ENCODE measurements at regions of chr15 and their contacts with region 1.

Region 1: GRCh38 chr15:83066734-83067637 is at the start of gene BTBD1:
- DNase-seq: peak; percentile 44 to 89 (median 75)
- ATAC-seq: peak; percentile 78
- H3K4me3 ChIP-seq: peak within 1 kb of the TSS; percentile 77 to 84
- H3K4me3 Mint-ChIP-seq: peak within 1 kb of the TSS; percentile 87
- H3K27ac ChIP-seq: peak within 1 kb of the TSS; percentile 65 to 78
- H3K27ac Mint-ChIP-seq: peak within 1 kb of the TSS; percentile 77
- H3K4me1 ChIP-seq: peaks cover 42% of the 10 kb centered on the region
- H3K4me1 Mint-ChIP-seq: peaks cover 26% of the 10 kb centered on the region
- H3K27me3 ChIP-seq: no peaks in the 10 kb centered on the region
- H3K27me3 Mint-ChIP-seq: no peaks in the 10 kb centered on the region
- CTCF ChIP-seq: no peak
- total RNA-seq, gene BTBD1: 32.5 to 33.6 TPM

Region 2: DNA sequence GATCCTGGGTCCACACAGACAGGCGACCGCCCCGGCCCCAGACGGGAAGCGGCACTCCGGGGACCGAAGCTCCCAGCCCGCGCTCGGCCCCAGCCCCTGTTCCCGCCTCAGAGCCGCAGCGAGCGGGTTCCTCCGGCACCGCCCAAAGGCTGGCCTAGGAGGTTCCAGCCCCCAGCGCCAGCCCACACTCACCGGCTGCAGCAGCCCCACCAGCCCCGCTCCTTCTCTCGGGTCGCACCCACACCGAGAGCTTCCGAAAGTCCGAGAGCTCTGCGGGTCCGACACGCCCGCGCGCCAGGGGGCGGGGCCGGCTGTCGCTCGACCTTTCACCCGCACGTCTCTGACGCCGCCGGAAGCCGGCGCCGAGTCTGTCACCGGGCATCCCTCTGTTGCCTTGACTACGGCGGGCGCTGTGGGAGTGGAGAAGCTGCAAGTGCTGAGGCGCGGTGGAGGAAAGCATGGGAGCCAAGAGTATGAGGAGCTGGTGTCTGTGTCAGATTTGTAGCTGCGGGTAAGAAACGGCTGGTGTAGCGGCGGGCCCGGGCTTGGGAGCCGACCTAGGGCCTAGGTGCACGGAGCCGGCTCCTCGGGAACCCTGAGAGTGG is 804.5 kb before region 1 on chr15 and contains the starts of genes EFL1 and SAXO2:
- CTCF ChIA-PET with region 1: no interaction called
- POLR2A ChIA-PET with region 1: no interaction called
- intact Hi-C with region 1: loop called in 1 of 2 experiments (anchors 5 kb)
- DNase-seq: peak; percentile 76 to 93 (median 88)
- ATAC-seq: peak; percentile 94
- H3K4me3 ChIP-seq: peak within 1 kb of the TSS; percentile 59 to 72
- H3K4me3 Mint-ChIP-seq: peak within 1 kb of the TSS; percentile 93
- H3K27ac ChIP-seq: peak within 1 kb of the TSS; percentile 40 to 58
- H3K27ac Mint-ChIP-seq: peak within 1 kb of the TSS; percentile 88
- H3K4me1 ChIP-seq: peaks cover 24% of the 10 kb centered on the region
- H3K4me1 Mint-ChIP-seq: peaks cover 35% of the 10 kb centered on the region
- H3K27me3 ChIP-seq: no peaks in the 10 kb centered on the region
- H3K27me3 Mint-ChIP-seq: no peaks in the 10 kb centered on the region
- CTCF ChIP-seq: no peak
- total RNA-seq, gene EFL1: 5.0 to 9.5 TPM
- total RNA-seq, gene SAXO2: 2.6 to 2.9 TPM

Region 3: GRCh38 chr15:82680200-82681102 is 386.5 kb before region 1 on chr15:
- CTCF ChIA-PET with region 1: no interaction called
- POLR2A ChIA-PET with region 1: no interaction called
- intact Hi-C with region 1: loop called in 1 of 2 experiments (anchors 5 kb)
- DNase-seq: peak; percentile 65 to 92 (median 82)
- ATAC-seq: peak; percentile 95
- H3K4me3 ChIP-seq: peak overlapping the region; percentile 71 to 81
- H3K4me3 Mint-ChIP-seq: peak overlapping the region; percentile 91
- H3K27ac ChIP-seq: peak overlapping the region; percentile 68 to 76
- H3K27ac Mint-ChIP-seq: peak overlapping the region; percentile 96
- H3K4me1 ChIP-seq: peaks cover 12% of the 10 kb centered on the region
- H3K4me1 Mint-ChIP-seq: peaks cover 13% of the 10 kb centered on the region
- H3K27me3 ChIP-seq: peaks cover 0 to 3% of the 10 kb centered on the region in 2 experiments
- H3K27me3 Mint-ChIP-seq: no peaks in the 10 kb centered on the region
- CTCF ChIP-seq: peak; percentile 25

Region 4: DNA sequence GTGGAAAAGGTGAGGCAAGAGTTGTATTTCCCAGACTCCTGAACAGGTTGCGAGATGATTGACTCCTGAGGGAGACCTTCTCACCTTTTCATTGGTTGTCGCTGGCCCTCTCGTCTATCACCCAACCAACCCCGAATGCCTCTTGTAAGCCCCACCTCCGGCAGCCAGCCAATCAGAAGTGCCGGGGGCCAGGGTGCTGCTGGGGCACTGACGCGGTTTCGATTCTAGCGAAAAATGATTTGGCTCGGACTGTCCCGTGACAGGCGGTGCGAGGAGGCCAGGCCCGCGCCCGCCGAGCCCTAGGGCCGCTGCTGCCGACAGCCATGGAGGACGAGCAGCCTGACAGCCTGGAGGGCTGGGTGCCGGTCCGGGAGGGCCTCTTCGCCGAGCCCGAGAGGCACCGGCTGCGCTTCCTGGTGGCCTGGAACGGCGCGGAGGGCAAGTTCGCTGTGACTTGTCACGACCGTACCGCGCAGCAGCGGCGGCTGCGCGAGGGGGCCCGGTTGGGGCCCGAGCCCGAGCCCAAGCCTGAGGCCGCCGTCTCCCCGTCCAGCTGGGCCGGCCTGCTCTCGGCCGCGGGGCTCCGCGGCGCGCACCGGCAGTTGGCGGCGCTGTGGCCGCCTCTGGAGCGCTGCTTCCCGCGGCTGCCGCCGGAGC is 257.5 kb before region 1 on chr15 and contains the start of gene WHAMM:
- CTCF ChIA-PET with region 1: no interaction called
- POLR2A ChIA-PET with region 1: interaction called, 3 read pairs
- intact Hi-C with region 1: loop called in 1 of 2 experiments (anchors 5 kb)
- DNase-seq: peak; percentile 89 to 98 (median 94)
- ATAC-seq: peak; percentile 93
- H3K4me3 ChIP-seq: peak within 1 kb of the TSS; percentile 67 to 69
- H3K4me3 Mint-ChIP-seq: peak within 1 kb of the TSS; percentile 92
- H3K27ac ChIP-seq: peak within 1 kb of the TSS; percentile 93 to 97
- H3K27ac Mint-ChIP-seq: peak within 1 kb of the TSS; percentile 97
- H3K4me1 ChIP-seq: peaks cover 26% of the 10 kb centered on the region
- H3K4me1 Mint-ChIP-seq: peaks cover 32% of the 10 kb centered on the region
- H3K27me3 ChIP-seq: no peaks in the 10 kb centered on the region
- H3K27me3 Mint-ChIP-seq: no peaks in the 10 kb centered on the region
- CTCF ChIP-seq: no peak
- total RNA-seq, gene WHAMM: 123 to 124 TPM

Region 5: GRCh38 chr15:83011271-83012075 is 55.5 kb before region 1 on chr15 and contains the start of gene C15orf40:
- CTCF ChIA-PET with region 1: interaction called, 3 read pairs
- POLR2A ChIA-PET with region 1: interaction called, 11 read pairs
- intact Hi-C with region 1: loop called (anchors 1 kb)
- DNase-seq: peak; percentile 62 to 94 (median 86)
- ATAC-seq: peak; percentile 80
- H3K4me3 ChIP-seq: peak within 1 kb of the TSS; percentile 86 to 95
- H3K4me3 Mint-ChIP-seq: peak within 1 kb of the TSS; percentile 100
- H3K27ac ChIP-seq: peak within 1 kb of the TSS; percentile 75 to 79
- H3K27ac Mint-ChIP-seq: peak within 1 kb of the TSS; percentile 99
- H3K4me1 ChIP-seq: peaks cover 26% of the 10 kb centered on the region
- H3K4me1 Mint-ChIP-seq: peaks cover 58% of the 10 kb centered on the region
- H3K27me3 ChIP-seq: no peaks in the 10 kb centered on the region
- H3K27me3 Mint-ChIP-seq: no peaks in the 10 kb centered on the region
- CTCF ChIP-seq: no peak
- total RNA-seq, gene C15orf40: 11.8 to 12.3 TPM

Region 6: DNA sequence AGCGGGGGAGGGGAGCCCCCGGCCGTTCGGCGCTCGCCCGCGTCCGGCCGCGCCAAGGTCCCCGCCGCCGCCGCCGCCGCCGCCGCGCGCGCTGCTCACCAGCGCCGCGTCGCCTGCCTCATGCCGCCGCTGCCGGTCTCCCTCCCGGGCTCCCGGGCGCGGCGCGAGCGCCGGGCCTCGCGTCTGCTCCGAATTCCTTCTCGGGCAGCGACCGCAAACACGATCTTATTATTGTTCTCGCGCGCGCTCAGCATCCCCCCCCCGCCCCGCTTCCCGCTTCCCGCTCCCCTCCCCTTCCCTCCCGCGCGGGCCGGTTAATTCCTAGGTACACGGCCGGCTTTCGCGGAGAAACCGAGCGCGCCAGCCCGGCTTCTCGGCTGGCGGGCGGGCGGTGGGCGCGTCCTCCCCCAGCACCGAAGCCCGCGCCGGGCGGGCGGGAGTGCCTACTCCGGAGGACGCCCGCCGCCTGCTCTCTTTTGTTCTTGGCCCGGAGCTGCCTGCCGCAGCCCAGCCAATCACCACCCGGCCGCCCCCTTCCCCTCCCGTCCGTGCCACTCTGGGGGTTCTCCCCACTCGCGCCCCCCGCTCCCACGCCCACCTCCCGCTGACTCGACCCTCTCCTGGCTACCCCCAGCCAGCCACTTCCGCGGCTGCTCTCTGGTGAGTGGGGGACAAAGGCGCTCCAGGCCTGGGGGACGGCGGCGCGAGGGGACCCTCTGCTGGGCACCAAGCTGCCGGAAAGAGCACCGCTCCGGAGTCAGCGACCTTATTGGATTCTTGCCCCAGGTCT is 140.8 kb after region 1 on chr15 and contains the start of gene HDGFL3:
- CTCF ChIA-PET with region 1: no interaction called
- POLR2A ChIA-PET with region 1: no interaction called
- intact Hi-C with region 1: loop called (anchors 5 to 10 kb)
- DNase-seq: peak in 8 of 9 experiments; percentile 0 to 56 (median 15)
- ATAC-seq: peak; percentile 61
- H3K4me3 ChIP-seq: peak within 1 kb of the TSS; percentile 51 to 55
- H3K4me3 Mint-ChIP-seq: peak within 1 kb of the TSS; percentile 93
- H3K27ac ChIP-seq: no peak within 1 kb of the TSS
- H3K27ac Mint-ChIP-seq: peak within 1 kb of the TSS; percentile 82
- H3K4me1 ChIP-seq: peaks cover 13% of the 10 kb centered on the region
- H3K4me1 Mint-ChIP-seq: peaks cover 16% of the 10 kb centered on the region
- H3K27me3 ChIP-seq: peaks cover 3 to 16% of the 10 kb centered on the region in 2 experiments
- H3K27me3 Mint-ChIP-seq: peaks cover 7% of the 10 kb centered on the region
- CTCF ChIP-seq: no peak
- total RNA-seq, gene HDGFL3: 12.7 to 15.5 TPM

Region 7: DNA sequence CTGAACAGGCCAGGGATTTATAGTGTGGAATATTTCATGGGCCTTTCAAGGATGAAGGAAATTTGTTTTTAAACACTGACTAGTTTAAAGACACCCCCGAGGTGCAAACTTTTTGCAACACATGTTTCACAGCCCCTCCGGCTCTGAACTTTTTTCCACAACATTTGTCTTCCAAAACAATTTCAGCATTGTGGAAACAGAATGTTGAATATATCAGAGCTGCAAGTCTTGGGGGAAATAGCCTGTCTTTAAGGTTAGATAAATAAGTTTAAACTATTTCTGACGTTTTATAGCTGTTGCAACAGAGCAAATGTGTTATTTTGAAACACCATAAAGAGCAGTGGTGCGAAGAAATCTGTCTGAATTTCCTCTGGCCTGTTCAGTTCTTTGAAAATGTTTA is 939.4 kb after region 1 on chr15:
- CTCF ChIA-PET with region 1: no interaction called
- POLR2A ChIA-PET with region 1: no interaction called
- intact Hi-C with region 1: no loop called
- DNase-seq: no peak
- ATAC-seq: no peak
- H3K4me3 ChIP-seq: no peak overlapping the region
- H3K4me3 Mint-ChIP-seq: no peak overlapping the region
- H3K27ac ChIP-seq: no peak overlapping the region
- H3K27ac Mint-ChIP-seq: no peak overlapping the region
- H3K4me1 ChIP-seq: no peaks in the 10 kb centered on the region
- H3K4me1 Mint-ChIP-seq: no peaks in the 10 kb centered on the region
- H3K27me3 ChIP-seq: no peaks in the 10 kb centered on the region
- H3K27me3 Mint-ChIP-seq: no peaks in the 10 kb centered on the region
- CTCF ChIP-seq: no peak

Measured in CD8-positive, alpha-beta T cell (primary cell).